ENCODE measurements at regions of chr3 and their contacts with region 1.

Region 1: DNA sequence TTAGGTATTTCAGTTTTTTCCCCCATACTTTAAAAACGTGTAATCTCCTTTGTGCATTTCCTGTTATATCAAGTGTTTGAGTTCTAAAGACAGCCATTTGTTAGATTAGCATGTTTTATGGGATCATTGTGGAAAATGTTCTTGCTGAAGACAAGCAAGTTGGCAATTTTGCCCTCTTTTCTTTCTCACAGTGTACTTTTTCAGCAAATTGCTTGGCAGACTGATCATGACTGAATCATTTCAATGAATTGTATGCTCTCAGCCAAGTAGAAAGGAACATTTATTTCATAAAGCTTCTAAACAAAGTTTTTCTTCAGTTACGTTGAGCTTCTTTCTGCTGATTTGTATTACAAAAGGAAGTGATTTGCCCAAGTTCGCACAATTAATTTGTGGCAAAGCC is 51.6 kb downstream of the ATG7 start:
- DNase-seq: no peak
- ATAC-seq: no peak
- H3K4me3 ChIP-seq: no peak overlapping the region
- H3K27ac ChIP-seq: peak overlapping the region in 1 of 10 donors; percentile 22
- H3K4me1 ChIP-seq: no peaks in the 10 kb centered on the region
- H3K27me3 ChIP-seq: no peaks in the 10 kb centered on the region
- CTCF ChIP-seq: no peak

Region 2: GRCh38 chr3:11168881-11169805 is 154.7 kb before region 1 on chr3:
- intact Hi-C with region 1: loop called in 1 of 10 experiments (anchors 10 kb)
- DNase-seq: no peak
- ATAC-seq: peak in 1 of 8 donors; percentile 28
- H3K4me3 ChIP-seq: no peak overlapping the region
- H3K27ac ChIP-seq: no peak overlapping the region
- H3K4me1 ChIP-seq: peaks cover 0 to 18% (median 7%) of the 10 kb centered on the region in 9 donors
- H3K27me3 ChIP-seq: no peaks in the 10 kb centered on the region
- CTCF ChIP-seq: no peak

Region 3: GRCh38 chr3:11244126-11244677 is 79.6 kb before region 1 on chr3:
- intact Hi-C with region 1: loop called in 1 of 10 experiments (anchors 10 kb)
- DNase-seq: no peak
- ATAC-seq: no peak
- H3K4me3 ChIP-seq: no peak overlapping the region
- H3K27ac ChIP-seq: no peak overlapping the region
- H3K4me1 ChIP-seq: no peaks in the 10 kb centered on the region
- H3K27me3 ChIP-seq: peaks cover 0 to 3% (median 0%) of the 10 kb centered on the region in 7 donors
- CTCF ChIP-seq: no peak

Measured in heart right ventricle (tissue), 16 donors.